B cell (primary cell): ENCODE measurements at regions of chr6 and their contacts with region 1.

Region 1: GRCh38 chr6:79048611-79049010 is 29.4 kb downstream of the PHIP start:
- DNase-seq: no peak
- ATAC-seq: no peak
- H3K4me3 ChIP-seq: no peak overlapping the region
- H3K4me3 Mint-ChIP-seq: no peak overlapping the region
- H3K27ac ChIP-seq: no peak overlapping the region
- H3K27ac Mint-ChIP-seq: no peak overlapping the region
- H3K4me1 ChIP-seq: no peaks in the 10 kb centered on the region
- H3K4me1 Mint-ChIP-seq: peaks cover 10% of the 10 kb centered on the region
- H3K27me3 ChIP-seq: no peaks in the 10 kb centered on the region
- H3K27me3 Mint-ChIP-seq: no peaks in the 10 kb centered on the region
- CTCF ChIP-seq: peak; percentile 53

Region 2: DNA sequence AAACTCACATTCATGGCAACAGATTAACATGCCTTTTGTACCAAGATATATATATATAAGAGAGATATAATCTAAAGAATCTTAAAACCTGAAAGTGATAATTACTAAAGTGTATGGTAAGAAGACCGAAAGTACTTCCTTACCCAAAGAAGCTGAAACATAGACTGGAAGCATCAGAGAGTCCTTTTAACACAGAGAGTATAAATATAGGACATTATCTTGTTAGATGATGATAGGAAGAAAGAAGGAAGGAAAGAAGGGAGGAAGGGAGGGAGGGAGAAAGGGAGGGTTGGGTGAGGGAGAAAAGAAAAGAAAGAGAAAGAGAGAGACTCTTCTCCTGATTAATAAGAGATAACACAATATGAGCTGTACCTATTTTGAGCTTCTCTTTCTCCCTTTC is 38.8 kb before region 1 on chr6:
- CTCF ChIA-PET with region 1: no interaction called
- POLR2A ChIA-PET with region 1: no interaction called
- intact Hi-C with region 1: loop called (anchors 5 kb)
- DNase-seq: no peak
- ATAC-seq: no peak
- H3K4me3 ChIP-seq: no peak overlapping the region
- H3K4me3 Mint-ChIP-seq: no peak overlapping the region
- H3K27ac ChIP-seq: no peak overlapping the region
- H3K27ac Mint-ChIP-seq: no peak overlapping the region
- H3K4me1 ChIP-seq: no peaks in the 10 kb centered on the region
- H3K4me1 Mint-ChIP-seq: no peaks in the 10 kb centered on the region
- H3K27me3 ChIP-seq: no peaks in the 10 kb centered on the region
- H3K27me3 Mint-ChIP-seq: no peaks in the 10 kb centered on the region
- CTCF ChIP-seq: no peak

Region 3: GRCh38 chr6:79137671-79138070 is 89.1 kb after region 1 on chr6:
- CTCF ChIA-PET with region 1: no interaction called
- POLR2A ChIA-PET with region 1: no interaction called
- intact Hi-C with region 1: no loop called
- DNase-seq: no peak
- ATAC-seq: no peak
- H3K4me3 ChIP-seq: no peak overlapping the region
- H3K4me3 Mint-ChIP-seq: no peak overlapping the region
- H3K27ac ChIP-seq: no peak overlapping the region
- H3K27ac Mint-ChIP-seq: no peak overlapping the region
- H3K4me1 ChIP-seq: no peaks in the 10 kb centered on the region
- H3K4me1 Mint-ChIP-seq: no peaks in the 10 kb centered on the region
- H3K27me3 ChIP-seq: peaks cover 0 to 11% (median 3%) of the 10 kb centered on the region in 4 experiments
- H3K27me3 Mint-ChIP-seq: peaks cover 10% of the 10 kb centered on the region
- CTCF ChIP-seq: no peak